ENCODE measurements at regions of chr12 and their contacts with region 1.

Region 1: GRCh38 chr12:118372541-118373495 is at the start of gene TAOK3:
- DNase-seq: peak; percentile 98 to 99 (median 99)
- ATAC-seq: peak; percentile 96 to 97
- H3K4me3 ChIP-seq: peak within 1 kb of the TSS; percentile 98
- H3K27ac ChIP-seq: peak within 1 kb of the TSS; percentile 99
- H3K4me1 ChIP-seq: no peaks in the 10 kb centered on the region
- H3K27me3 ChIP-seq: no peaks in the 10 kb centered on the region
- total RNA-seq, gene TAOK3: 18.9 to 29.1 (median 25.1) TPM

Region 2: GRCh38 chr12:118120579-118121363 is 252.0 kb before region 1 on chr12:
- intact Hi-C with region 1: loop called in 3 of 4 experiments (anchors 5 kb)
- DNase-seq: peak; percentile 73 to 87 (median 87)
- ATAC-seq: peak; percentile 77 to 90
- H3K4me3 ChIP-seq: no peak overlapping the region
- H3K27ac ChIP-seq: peak overlapping the region; percentile 64
- H3K4me1 ChIP-seq: peaks cover 5% of the 10 kb centered on the region
- H3K27me3 ChIP-seq: no peaks in the 10 kb centered on the region

Region 3: GRCh38 chr12:118183705-118184104 is 189.1 kb before region 1 on chr12:
- intact Hi-C with region 1: loop called in 2 of 4 experiments (anchors 5 kb)
- DNase-seq: no peak
- ATAC-seq: no peak
- H3K4me3 ChIP-seq: no peak overlapping the region
- H3K27ac ChIP-seq: no peak overlapping the region
- H3K4me1 ChIP-seq: peaks cover 2% of the 10 kb centered on the region
- H3K27me3 ChIP-seq: no peaks in the 10 kb centered on the region

Region 4: DNA sequence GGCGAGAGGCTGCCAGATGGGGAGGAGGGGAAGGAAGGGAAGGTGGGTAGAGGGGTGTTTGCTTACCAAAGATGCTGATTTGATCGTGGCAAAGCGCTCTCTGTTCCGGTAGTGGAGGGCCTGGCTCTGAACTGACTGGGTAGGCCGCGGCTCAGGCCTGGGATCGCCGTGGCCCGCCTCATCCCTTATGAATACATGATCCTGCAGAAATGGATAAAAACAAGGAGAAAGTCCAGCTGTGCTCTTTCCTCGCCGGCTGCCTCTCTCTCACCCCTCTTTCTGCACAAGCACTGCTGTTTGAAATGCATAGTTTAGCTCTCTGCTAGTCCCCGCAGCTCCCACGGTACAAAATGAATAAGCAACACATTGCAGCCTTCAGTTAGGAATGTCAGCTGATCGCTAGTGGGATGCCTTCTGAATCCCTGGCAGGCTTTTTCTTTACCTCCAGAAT is 183.1 kb before region 1 on chr12:
- intact Hi-C with region 1: loop called (anchors 5 kb)
- DNase-seq: peak; percentile 32 to 70 (median 59)
- ATAC-seq: peak; percentile 80 to 81
- H3K4me3 ChIP-seq: peak overlapping the region; percentile 31
- H3K27ac ChIP-seq: peak overlapping the region; percentile 86
- H3K4me1 ChIP-seq: peaks cover 2% of the 10 kb centered on the region
- H3K27me3 ChIP-seq: no peaks in the 10 kb centered on the region

Region 5: GRCh38 chr12:118315821-118316220 is 57.0 kb before region 1 on chr12:
- intact Hi-C with region 1: no loop called
- DNase-seq: no peak
- ATAC-seq: no peak
- H3K4me3 ChIP-seq: no peak overlapping the region
- H3K27ac ChIP-seq: no peak overlapping the region
- H3K4me1 ChIP-seq: no peaks in the 10 kb centered on the region
- H3K27me3 ChIP-seq: no peaks in the 10 kb centered on the region

Region 6: GRCh38 chr12:118494789-118495188 is 122.0 kb after region 1 on chr12:
- intact Hi-C with region 1: no loop called
- DNase-seq: no peak
- ATAC-seq: no peak
- H3K4me3 ChIP-seq: no peak overlapping the region
- H3K27ac ChIP-seq: no peak overlapping the region
- H3K4me1 ChIP-seq: no peaks in the 10 kb centered on the region
- H3K27me3 ChIP-seq: no peaks in the 10 kb centered on the region

Measured in right cardiac atrium (tissue), 5 donors.